Dorsolateral prefrontal cortex (tissue), 120 donors: ENCODE measurements at regions of chr17 and their contacts with region 1.

Region 1: GRCh38 chr17:32503251-32504165 is 16.7 kb downstream of the CDK5R1 start:
- DNase-seq: no peak
- H3K4me3 ChIP-seq: no peak overlapping the region
- H3K27ac ChIP-seq: peak overlapping the region in 33 of 59 donors; percentile 4 to 72 (median 41)
- H3K27me3 ChIP-seq: no peaks in the 10 kb centered on the region
- CTCF ChIP-seq: no peak

Region 2: GRCh38 chr17:32227910-32228309 is 275.6 kb before region 1 on chr17:
- intact Hi-C with region 1: no loop called
- DNase-seq: no peak
- H3K4me3 ChIP-seq: no peak overlapping the region
- H3K27ac ChIP-seq: no peak overlapping the region
- H3K27me3 ChIP-seq: no peaks in the 10 kb centered on the region
- CTCF ChIP-seq: no peak

Region 3: DNA sequence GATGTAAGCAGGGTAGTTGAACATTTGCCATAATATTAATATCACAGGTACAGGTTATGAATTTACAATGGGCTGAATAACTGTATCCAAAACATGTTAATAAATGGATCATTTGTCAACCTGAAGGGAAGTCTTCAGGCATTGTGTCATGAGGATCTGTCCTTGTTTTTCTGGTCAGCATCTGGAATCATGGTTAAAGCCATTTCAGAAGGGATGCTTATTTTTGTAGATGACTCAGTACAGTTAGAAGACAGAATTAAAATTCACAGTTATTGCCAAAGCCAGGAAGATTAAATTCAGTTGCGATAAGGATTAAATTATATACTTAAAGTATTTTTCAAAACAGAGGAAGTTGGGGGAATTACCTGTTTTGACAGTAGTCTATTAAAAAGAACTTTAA is 51.2 kb before region 1 on chr17:
- intact Hi-C with region 1: no loop called
- DNase-seq: no peak
- H3K4me3 ChIP-seq: no peak overlapping the region
- H3K27ac ChIP-seq: no peak overlapping the region
- H3K27me3 ChIP-seq: no peaks in the 10 kb centered on the region
- CTCF ChIP-seq: no peak

Region 4: DNA sequence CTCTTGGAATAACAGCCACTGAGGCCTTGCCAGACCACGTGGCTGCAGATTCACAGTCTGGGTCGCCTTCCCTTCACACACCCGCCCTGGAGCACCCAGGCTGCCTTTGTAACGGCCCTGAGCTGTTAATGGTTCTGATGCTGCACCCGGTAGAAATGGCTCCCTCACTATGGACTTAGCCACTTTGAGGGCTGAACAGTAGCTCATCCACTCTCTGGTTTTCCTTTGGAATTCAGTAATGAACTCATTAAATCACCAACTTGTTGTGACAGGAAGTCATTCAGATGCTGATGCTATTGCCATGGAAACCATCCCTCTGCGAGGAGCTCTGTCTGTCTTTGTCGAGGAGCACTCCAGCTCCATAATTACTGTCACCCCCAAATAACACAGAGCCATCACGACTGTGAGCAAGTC is 42.5 kb after region 1 on chr17:
- intact Hi-C with region 1: loop called in 1 of 2 experiments (anchors 5 kb)
- DNase-seq: peak; percentile 58 to 83 (median 72)
- H3K4me3 ChIP-seq: peak overlapping the region in 33 of 59 donors; percentile 0 to 49 (median 25)
- H3K27ac ChIP-seq: peak overlapping the region in 58 of 59 donors; percentile 30 to 90 (median 76)
- H3K27me3 ChIP-seq: no peaks in the 10 kb centered on the region
- CTCF ChIP-seq: peak in 5 of 56 donors; percentile 14 to 31 (median 23)

Region 5: DNA sequence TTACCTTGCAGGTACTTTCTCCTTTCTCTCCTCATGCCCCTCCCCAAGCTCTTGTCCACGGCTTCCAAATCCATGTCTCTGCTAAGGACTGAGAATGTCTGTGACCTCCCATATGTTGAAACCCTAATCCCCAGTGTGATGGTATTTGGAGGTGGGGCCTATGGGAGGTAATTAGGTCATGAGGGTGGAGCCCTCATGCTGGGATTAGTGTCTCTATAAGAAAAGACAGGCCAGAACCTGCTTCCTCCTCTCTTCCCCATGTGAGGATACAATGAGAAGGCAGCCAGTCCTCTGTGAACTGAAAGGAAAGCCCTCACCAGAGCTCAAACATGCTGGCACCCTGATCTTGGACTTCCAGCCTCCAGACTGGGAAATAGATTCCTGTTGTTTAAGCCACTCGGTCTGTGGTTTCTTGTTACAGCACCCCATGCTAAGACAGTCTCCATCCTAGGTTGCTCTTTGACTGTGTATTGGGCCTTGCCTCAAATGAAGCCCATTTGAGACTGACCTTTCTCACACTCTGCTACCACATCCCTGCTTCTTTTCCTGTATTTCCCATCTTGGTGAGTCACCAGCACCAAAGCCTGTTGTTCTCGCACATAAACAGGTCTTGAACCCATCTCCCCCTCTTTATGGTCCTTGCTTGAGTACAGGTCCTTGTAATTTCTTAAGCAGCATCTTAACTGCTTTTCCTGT is 118.3 kb after region 1 on chr17:
- intact Hi-C with region 1: loop called (anchors 5 to 10 kb)
- DNase-seq: no peak
- H3K4me3 ChIP-seq: no peak overlapping the region
- H3K27ac ChIP-seq: no peak overlapping the region
- H3K27me3 ChIP-seq: no peaks in the 10 kb centered on the region
- CTCF ChIP-seq: no peak